ENCODE measurements at regions of chr9 and their contacts with region 1.

Region 1: GRCh38 chr9:72464857-72465592 is 56.4 kb upstream of the TMC1 start:
- DNase-seq: no peak
- H3K4me3 ChIP-seq: no peak overlapping the region
- H3K27ac ChIP-seq: peak overlapping the region in 1 of 4 donors; percentile 15
- H3K4me1 ChIP-seq: peaks cover 0 to 4% (median 0%) of the 10 kb centered on the region in 4 donors
- H3K27me3 ChIP-seq: no peaks in the 10 kb centered on the region
- CTCF ChIP-seq: no peak
- EP300 ChIP-seq: no peak
- POLR2A ChIP-seq: no peak

Region 2: GRCh38 chr9:72396247-72397091 is 68.6 kb before region 1 on chr9:
- in situ Hi-C with region 1: loop called in 1 of 4 experiments (anchors 10 kb)
- intact Hi-C with region 1: no loop called
- DNase-seq: no peak
- H3K4me3 ChIP-seq: no peak overlapping the region
- H3K27ac ChIP-seq: peak overlapping the region in 2 of 4 donors; percentile 6 to 52
- H3K4me1 ChIP-seq: peaks cover 4 to 17% (median 7%) of the 10 kb centered on the region in 4 donors
- H3K27me3 ChIP-seq: no peaks in the 10 kb centered on the region
- CTCF ChIP-seq: no peak
- EP300 ChIP-seq: no peak
- POLR2A ChIP-seq: no peak

Region 3: DNA sequence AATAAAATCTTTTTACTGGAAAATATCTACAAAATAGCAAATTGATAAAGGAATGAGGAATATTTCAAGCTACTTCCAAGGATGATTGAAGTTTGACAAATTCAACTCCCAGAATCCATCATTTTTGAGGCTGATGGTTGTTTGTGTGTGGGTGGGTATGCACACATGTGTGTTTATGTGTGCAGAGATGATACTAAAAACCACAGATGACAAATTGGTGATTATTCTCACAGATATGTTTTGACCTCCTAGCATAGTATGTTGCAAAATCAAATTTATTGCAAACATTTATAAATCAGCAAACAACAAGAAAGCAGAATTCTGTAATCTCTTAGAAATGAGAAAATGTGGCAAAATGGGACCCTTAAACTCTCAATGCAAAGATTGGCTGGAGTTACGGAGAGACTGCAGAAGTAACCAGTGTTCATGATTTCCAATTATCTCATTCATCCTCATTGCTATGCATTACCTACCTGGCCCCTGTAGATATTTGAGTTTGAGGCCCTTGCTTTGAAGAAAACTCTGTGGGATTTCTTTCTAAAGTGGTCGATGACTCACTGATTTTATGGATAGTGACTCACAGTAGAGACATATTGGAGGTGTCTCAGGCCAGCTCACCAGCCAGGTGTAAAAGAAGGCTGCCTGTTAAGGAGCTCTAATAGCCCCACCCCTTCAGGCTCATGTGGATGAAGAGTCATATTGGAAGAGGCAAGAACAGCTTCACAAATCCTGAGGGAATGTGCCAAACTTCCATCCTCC is 11.8 kb after region 1 on chr9:
- in situ Hi-C with region 1: no loop called
- intact Hi-C with region 1: no loop called
- DNase-seq: peak; percentile 40
- H3K4me3 ChIP-seq: no peak overlapping the region
- H3K27ac ChIP-seq: peak overlapping the region; percentile 8 to 76 (median 65)
- H3K4me1 ChIP-seq: peaks cover 0 to 43% (median 24%) of the 10 kb centered on the region in 4 donors
- H3K27me3 ChIP-seq: no peaks in the 10 kb centered on the region
- CTCF ChIP-seq: no peak
- EP300 ChIP-seq: no peak
- POLR2A ChIP-seq: no peak

Measured in transverse colon (tissue), 4 donors.